ENCODE measurements at regions of chr3 and their contacts with region 1.

Region 1: GRCh38 chr3:196632046-196632751 is 7.3 kb upstream of the NRROS start:
- DNase-seq: peak; percentile 79
- ATAC-seq: peak; percentile 86
- H3K4me3 ChIP-seq: peak overlapping the region; percentile 71
- H3K27ac ChIP-seq: peak overlapping the region; percentile 60
- H3K4me1 ChIP-seq: peaks cover 24% of the 10 kb centered on the region
- H3K27me3 ChIP-seq: no peaks in the 10 kb centered on the region
- CTCF ChIP-seq: peak; percentile 31; the same call in 1 of the 2 replicates

Region 2: GRCh38 chr3:196399485-196399945 is 232.7 kb before region 1 on chr3:
- CTCF ChIA-PET with region 1: no interaction called
- POLR2A ChIA-PET with region 1: no interaction called
- intact Hi-C with region 1: no loop called
- DNase-seq: peak; percentile 87
- ATAC-seq: peak; percentile 93
- H3K4me3 ChIP-seq: no peak overlapping the region
- H3K27ac ChIP-seq: no peak overlapping the region
- H3K4me1 ChIP-seq: peaks cover 23% of the 10 kb centered on the region
- H3K27me3 ChIP-seq: no peaks in the 10 kb centered on the region
- CTCF ChIP-seq: no peak

Region 3: DNA sequence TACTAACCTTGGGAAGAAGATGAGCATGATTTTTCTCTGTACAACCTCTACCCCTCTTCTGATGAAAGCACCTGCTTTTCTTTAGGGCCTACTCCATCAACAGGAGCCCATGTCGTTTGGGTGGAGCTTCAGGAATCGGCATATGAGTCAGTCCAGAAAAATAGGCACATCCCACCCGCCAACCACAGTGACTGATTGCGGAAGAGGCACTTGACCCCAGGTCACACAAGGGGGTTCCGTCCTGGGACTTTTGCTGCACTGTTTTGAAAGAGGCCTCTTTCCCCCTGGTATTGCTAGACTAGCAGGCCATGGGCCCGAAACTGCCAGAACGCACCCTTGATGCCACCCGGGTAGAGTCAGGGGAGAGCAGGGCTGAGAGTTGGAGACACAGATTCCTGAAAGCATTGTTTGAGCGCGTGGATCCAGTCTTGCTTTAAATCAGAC is 12.0 kb before region 1 on chr3:
- CTCF ChIA-PET with region 1: no interaction called
- POLR2A ChIA-PET with region 1: interaction called, 15 read pairs
- intact Hi-C with region 1: no loop called
- DNase-seq: no peak
- ATAC-seq: no peak
- H3K4me3 ChIP-seq: no peak overlapping the region
- H3K27ac ChIP-seq: no peak overlapping the region
- H3K4me1 ChIP-seq: no peaks in the 10 kb centered on the region
- H3K27me3 ChIP-seq: no peaks in the 10 kb centered on the region
- CTCF ChIP-seq: no peak

Region 4: GRCh38 chr3:196665962-196666867 is 34.0 kb after region 1 on chr3:
- CTCF ChIA-PET with region 1: interaction called, 12 read pairs
- POLR2A ChIA-PET with region 1: no interaction called
- intact Hi-C with region 1: no loop called
- DNase-seq: peak; percentile 40
- ATAC-seq: peak; percentile 52
- H3K4me3 ChIP-seq: no peak overlapping the region
- H3K27ac ChIP-seq: no peak overlapping the region
- H3K4me1 ChIP-seq: no peaks in the 10 kb centered on the region
- H3K27me3 ChIP-seq: no peaks in the 10 kb centered on the region
- CTCF ChIP-seq: no peak